ENCODE measurements at regions of chr18 and their contacts with region 1.

Region 1: GRCh38 chr18:31942999-31943865 is at the start of gene TRAPPC8:
- DNase-seq: peak; percentile 92
- H3K4me3 ChIP-seq: peak within 1 kb of the TSS; percentile 98
- H3K27ac ChIP-seq: peak within 1 kb of the TSS; percentile 78
- H3K4me1 ChIP-seq: peaks cover 3% of the 10 kb centered on the region
- CTCF ChIP-seq: no peak
- total RNA-seq, gene TRAPPC8: 23.4 and 34.3 TPM in 2 replicates

Region 2: GRCh38 chr18:31576670-31577069 is 366.6 kb before region 1 on chr18:
- CTCF ChIA-PET with region 1: no interaction called
- POLR2A ChIA-PET with region 1: no interaction called
- intact Hi-C with region 1: loop called (anchors 5 kb)
- DNase-seq: peak; percentile 92
- H3K4me3 ChIP-seq: peak overlapping the region; percentile 32
- H3K27ac ChIP-seq: peak overlapping the region; percentile 99
- H3K4me1 ChIP-seq: peaks cover 86% of the 10 kb centered on the region
- CTCF ChIP-seq: no peak

Region 3: GRCh38 chr18:31685097-31686082 is 257.8 kb before region 1 on chr18:
- CTCF ChIA-PET with region 1: no interaction called
- POLR2A ChIA-PET with region 1: no interaction called
- intact Hi-C with region 1: loop called (anchors 5 kb)
- DNase-seq: peak; percentile 82
- H3K4me3 ChIP-seq: peak overlapping the region; percentile 75
- H3K27ac ChIP-seq: peak overlapping the region; percentile 86
- H3K4me1 ChIP-seq: peaks cover 37% of the 10 kb centered on the region
- CTCF ChIP-seq: 0 out of 2 replicates have a peak, but pooled peaks have one; percentile 34

Region 4: GRCh38 chr18:32018331-32019250 is 75.4 kb after region 1 on chr18 and contains the start of gene RNF125:
- CTCF ChIA-PET with region 1: no interaction called
- POLR2A ChIA-PET with region 1: interaction called, 4 read pairs
- intact Hi-C with region 1: loop called (anchors 1 kb)
- DNase-seq: peak; percentile 82
- H3K4me3 ChIP-seq: peak within 1 kb of the TSS; percentile 76
- H3K27ac ChIP-seq: peak within 1 kb of the TSS; percentile 81
- H3K4me1 ChIP-seq: peaks cover 5% of the 10 kb centered on the region
- CTCF ChIP-seq: 0 out of 2 replicates have a peak, but pooled peaks have one; percentile 13
- total RNA-seq, gene RNF125: 1.2 TPM in 2 replicates

Region 5: GRCh38 chr18:32092422-32093101 is 149.3 kb after region 1 on chr18:
- CTCF ChIA-PET with region 1: no interaction called
- POLR2A ChIA-PET with region 1: interaction called, 6 read pairs
- intact Hi-C with region 1: loop called (anchors 1 kb)
- DNase-seq: peak; percentile 91
- H3K4me3 ChIP-seq: peak overlapping the region; percentile 96
- H3K27ac ChIP-seq: peak overlapping the region; percentile 97
- H3K4me1 ChIP-seq: peaks cover 25% of the 10 kb centered on the region
- CTCF ChIP-seq: no peak